ENCODE measurements at regions of chrX and their contacts with region 1.

Region 1: DNA sequence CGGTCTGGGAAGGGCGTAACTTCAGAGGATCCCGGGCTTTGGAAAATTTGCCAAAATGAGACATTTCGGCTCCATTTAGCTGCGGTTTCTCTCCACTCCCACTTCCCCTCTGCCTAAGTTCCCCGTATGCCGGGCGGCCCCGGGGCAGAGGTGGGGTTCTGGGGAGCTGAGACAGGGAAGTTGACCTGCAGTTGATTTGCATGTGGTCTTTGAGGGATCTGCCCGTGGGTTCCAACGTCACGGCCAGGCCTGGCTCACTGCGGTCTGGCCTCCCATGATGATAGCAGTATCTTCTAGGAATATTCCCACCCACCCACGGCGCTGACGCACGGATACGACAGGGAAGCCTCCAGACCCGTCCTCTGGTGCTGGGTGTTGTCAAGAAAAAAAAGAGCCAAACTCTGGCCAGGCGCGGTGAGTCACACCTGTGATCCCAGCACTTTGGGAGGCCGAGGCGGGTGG is 27.3 kb upstream of the CRLF2 start:
- H3K4me3 Mint-ChIP-seq: peak overlapping the region; percentile 44
- H3K27ac Mint-ChIP-seq: peak overlapping the region; percentile 81
- H3K4me1 Mint-ChIP-seq: peaks cover 45% of the 10 kb centered on the region
- H3K27me3 Mint-ChIP-seq: peaks cover 11% of the 10 kb centered on the region

Region 2: DNA sequence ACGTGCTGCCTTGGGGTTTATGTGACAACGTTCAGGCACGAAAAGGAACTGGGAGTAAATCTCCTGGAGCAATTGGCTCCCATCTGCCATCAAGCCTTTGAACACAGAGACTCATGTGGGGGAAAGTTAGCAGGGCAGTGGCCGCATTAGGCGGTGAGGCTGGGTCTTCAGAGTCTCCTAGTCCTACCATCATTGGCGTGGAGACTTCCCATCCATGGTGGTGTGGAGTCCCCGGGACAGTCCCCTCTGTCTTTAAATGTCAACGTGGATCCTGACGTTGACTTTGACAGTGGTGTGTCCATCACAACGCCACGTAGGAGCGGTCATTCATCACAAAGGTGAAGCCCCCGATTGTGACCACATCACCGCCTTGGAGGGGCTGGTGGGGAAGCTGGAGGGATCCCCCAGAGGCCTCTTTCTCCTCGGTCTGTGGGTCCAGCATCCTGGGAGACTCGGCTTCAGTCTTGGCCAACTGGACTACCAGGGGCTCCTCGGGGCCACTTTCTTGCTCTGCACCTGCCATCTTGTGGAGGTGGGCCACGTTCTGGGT is 49.0 kb before region 1 on chrX:
- intact Hi-C with region 1: no loop called
- H3K4me3 Mint-ChIP-seq: no peak overlapping the region
- H3K27ac Mint-ChIP-seq: no peak overlapping the region
- H3K4me1 Mint-ChIP-seq: no peaks in the 10 kb centered on the region
- H3K27me3 Mint-ChIP-seq: no peaks in the 10 kb centered on the region

Region 3: GRCh38 chrX:1205680-1206611 is 33.8 kb before region 1 on chrX:
- intact Hi-C with region 1: loop called (anchors 2 kb)
- H3K4me3 Mint-ChIP-seq: peak overlapping the region; percentile 57
- H3K27ac Mint-ChIP-seq: no peak overlapping the region
- H3K4me1 Mint-ChIP-seq: peaks cover 28% of the 10 kb centered on the region
- H3K27me3 Mint-ChIP-seq: peaks cover 20% of the 10 kb centered on the region

Region 4: GRCh38 chrX:1222531-1223241 is 17.0 kb before region 1 on chrX:
- intact Hi-C with region 1: loop called (anchors 2 kb)
- H3K4me3 Mint-ChIP-seq: peak overlapping the region; percentile 53
- H3K27ac Mint-ChIP-seq: no peak overlapping the region
- H3K4me1 Mint-ChIP-seq: no peaks in the 10 kb centered on the region
- H3K27me3 Mint-ChIP-seq: peaks cover 15% of the 10 kb centered on the region

Measured in dendritic cell treated with granulocyte-macrophage colony-stimulating factor and Interleukin-4, amounts not matched to agents 40 ng/mL and 50 ng/mL, for 4 days (primary cell).